GM10248 (cell line): ENCODE measurements at regions of chr14 and their contacts with region 1.

Region 1: DNA sequence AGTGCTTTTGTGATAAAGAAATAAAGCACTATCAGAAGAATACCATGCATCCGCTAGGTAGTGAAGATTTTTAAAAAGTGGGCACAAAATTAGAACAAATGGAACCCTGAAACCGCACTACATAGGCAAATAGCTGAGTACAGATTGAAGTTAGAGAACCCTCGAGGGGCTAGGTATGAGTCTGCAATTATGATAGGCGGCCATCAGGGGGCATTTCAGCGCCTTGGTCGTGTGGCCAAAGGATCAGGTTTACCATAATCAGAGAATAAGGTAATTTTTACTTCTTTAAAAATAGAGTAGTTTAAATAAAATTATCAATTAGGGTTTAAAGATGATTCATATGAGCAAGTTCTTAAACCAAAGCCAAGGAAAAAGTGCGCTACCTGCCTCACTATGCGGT is 129.8 kb downstream of the TMX1 start:
- DNase-seq: peak; percentile 56
- CTCF ChIP-seq: peak; percentile 45

Region 2: DNA sequence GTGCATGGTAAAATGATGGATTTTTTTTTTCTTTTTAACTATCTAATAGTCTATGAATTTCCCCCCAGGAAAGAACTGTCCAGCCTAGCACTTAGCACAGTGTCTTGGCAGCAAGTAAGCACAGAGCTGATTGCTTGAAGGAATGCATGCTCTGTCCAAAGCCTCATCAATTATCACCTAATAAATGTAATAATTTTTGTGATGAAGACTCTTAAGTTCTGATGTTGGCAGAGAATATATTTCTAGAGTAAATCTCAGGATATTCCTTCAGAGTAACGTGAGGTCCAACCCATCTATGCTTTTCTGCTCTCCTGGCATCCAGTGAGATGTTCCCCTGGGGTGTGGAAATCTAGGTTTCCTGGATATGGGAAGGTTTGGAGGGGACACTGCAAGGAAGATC is 22.6 kb after region 1 on chr14:
- CTCF ChIA-PET with region 1: no interaction called
- POLR2A ChIA-PET with region 1: no interaction called
- DNase-seq: no peak
- CTCF ChIP-seq: no peak

Region 3: GRCh38 chr14:51780006-51780692 is 410.3 kb after region 1 on chr14:
- CTCF ChIA-PET with region 1: interaction called, 21 read pairs
- POLR2A ChIA-PET with region 1: no interaction called
- DNase-seq: peak; percentile 73
- CTCF ChIP-seq: peak; percentile 67